ENCODE measurements at regions of chr11 and their contacts with region 1.

Region 1: GRCh38 chr11:64529559-64530520 is 61.2 kb upstream of the SLC22A12 start:
- DNase-seq: no peak
- H3K4me3 ChIP-seq: no peak overlapping the region
- H3K27ac ChIP-seq: no peak overlapping the region
- H3K4me1 ChIP-seq: no peaks in the 10 kb centered on the region
- H3K27me3 ChIP-seq: peaks cover 49% of the 10 kb centered on the region
- CTCF ChIP-seq: no peak
- EP300 ChIP-seq: no peak
- POLR2A ChIP-seq: no peak

Region 2: DNA sequence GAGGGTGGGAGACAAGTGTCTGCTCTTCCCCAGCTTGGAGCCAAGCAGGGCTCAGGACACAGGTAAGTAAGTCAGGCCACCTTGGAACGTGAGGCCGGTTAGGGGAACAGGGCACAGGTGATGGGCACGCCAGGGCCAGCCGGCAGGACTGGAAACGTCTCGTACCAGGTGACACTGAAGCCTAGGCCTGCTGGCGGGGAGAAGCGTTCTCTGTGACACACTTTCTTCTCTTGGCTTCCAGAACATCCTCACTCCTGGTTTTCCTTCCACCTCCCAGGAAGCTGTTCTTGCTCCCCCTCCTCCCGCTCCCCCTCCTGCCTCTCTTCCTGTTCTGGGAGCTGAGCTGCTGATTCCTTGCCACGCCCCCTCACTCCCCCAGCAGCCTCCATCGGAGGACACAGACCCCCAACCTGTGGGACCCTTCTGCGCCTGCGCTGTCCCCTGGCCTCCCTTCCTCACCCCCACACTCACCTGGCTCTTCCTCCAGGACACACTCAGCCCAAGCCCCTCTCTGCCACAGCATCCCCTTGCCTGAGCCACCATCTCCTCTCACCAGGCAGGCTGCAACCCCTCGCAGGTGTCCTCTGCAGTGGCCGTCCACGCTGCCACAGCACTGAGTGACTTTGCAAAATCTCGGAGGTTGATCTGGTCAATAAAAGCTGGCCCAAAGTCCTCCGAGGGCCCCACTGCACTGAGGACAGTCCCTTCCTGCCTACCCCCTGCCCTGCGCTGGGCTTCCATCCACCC is 30.0 kb after region 1 on chr11:
- in situ Hi-C with region 1: no loop called
- intact Hi-C with region 1: loop called (anchors 1 kb)
- DNase-seq: peak; percentile 6
- H3K4me3 ChIP-seq: no peak overlapping the region
- H3K27ac ChIP-seq: no peak overlapping the region
- H3K4me1 ChIP-seq: peaks cover 4 to 10% (median 8%) of the 10 kb centered on the region in 4 donors
- H3K27me3 ChIP-seq: no peaks in the 10 kb centered on the region
- CTCF ChIP-seq: no peak
- EP300 ChIP-seq: no peak
- POLR2A ChIP-seq: no peak

Measured in transverse colon (tissue), 4 donors.